ENCODE measurements at regions of chr20 and their contacts with region 1.

Region 1: DNA sequence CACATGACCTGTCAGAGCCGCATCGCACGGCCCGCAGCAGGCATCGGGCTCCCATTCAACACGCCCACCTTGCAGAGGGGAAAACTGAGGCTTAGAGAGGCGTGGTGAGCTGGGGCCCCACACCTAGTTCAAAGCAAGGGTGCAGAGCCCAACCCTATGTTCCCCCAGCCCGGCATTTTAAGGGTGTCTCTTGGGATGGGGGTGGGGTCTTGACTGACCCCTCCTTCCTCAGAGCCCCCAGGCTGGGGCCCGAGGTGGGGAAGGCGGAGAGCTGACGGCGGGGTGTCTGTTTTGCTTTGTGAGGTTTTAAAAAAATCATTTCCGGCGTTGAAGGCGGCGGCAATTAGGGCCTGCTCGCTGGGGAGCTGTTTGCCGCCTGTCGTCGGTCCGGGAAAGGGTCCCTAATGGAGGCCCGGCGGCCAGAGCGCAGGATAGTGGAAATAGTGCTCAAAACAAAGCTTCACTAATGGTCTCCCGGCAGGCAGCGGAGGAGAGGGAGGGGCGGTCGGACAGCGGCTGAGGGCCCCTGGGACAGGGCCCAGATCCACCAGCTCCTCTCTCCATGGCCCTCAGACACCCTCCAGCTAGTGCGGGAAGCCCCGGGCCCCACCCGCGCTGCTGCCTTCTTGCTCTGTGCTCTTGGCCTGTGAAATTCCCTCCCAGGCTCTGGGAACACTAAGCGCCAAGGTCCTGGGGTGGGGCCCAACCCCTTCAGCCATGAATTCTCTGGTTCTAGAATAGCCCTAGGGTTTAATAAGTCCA is 11.9 kb downstream of the VSTM2L start:
- DNase-seq: peak; percentile 95
- H3K4me3 ChIP-seq: peak overlapping the region; percentile 26
- H3K27ac ChIP-seq: peak overlapping the region; percentile 94
- H3K4me1 ChIP-seq: peaks cover 86% of the 10 kb centered on the region
- H3K27me3 ChIP-seq: no peaks in the 10 kb centered on the region
- CTCF ChIP-seq: no peak

Region 2: DNA sequence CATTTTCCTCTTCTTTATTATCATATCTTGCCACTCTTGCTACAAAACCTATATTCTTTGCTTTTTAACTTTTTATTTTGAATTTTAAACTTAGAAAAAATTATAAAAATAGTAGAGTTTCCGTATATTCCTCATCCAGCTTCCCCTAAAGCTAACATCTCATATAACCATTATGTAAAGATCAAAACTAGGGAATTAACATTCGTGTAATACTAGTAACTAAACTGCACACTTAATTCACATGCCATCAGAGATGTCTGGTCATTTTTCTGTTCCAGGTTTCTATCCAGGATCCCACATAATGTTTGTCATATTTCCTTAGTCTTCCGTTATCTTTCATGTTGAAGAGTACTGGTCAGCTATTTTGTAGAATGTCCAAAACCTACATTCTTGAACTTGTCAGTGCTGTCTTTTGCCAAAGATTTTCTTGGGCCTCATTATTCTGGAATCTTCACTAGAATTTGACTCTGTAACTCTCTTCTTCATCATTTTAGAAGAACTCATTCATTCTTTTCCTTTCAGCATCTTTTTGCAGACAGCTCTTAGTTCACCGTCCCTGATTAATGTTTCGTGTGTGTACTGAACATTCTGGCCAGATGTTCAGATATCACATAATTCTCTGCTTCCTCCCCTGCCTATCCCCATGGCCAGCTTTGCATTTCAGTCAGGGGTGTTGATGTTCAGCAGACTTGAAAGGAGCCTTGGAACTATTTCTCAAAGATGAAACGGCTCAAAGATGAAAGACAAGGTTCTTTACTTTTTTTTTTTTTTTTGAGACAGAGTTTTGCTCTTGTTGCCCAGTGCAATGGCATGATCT is 211.6 kb before region 1 on chr20:
- CTCF ChIA-PET with region 1: no interaction called
- POLR2A ChIA-PET with region 1: interaction called, 10 read pairs
- intact Hi-C with region 1: no loop called
- DNase-seq: no peak
- H3K4me3 ChIP-seq: no peak overlapping the region
- H3K27ac ChIP-seq: no peak overlapping the region
- H3K4me1 ChIP-seq: no peaks in the 10 kb centered on the region
- H3K27me3 ChIP-seq: no peaks in the 10 kb centered on the region
- CTCF ChIP-seq: no peak

Region 3: DNA sequence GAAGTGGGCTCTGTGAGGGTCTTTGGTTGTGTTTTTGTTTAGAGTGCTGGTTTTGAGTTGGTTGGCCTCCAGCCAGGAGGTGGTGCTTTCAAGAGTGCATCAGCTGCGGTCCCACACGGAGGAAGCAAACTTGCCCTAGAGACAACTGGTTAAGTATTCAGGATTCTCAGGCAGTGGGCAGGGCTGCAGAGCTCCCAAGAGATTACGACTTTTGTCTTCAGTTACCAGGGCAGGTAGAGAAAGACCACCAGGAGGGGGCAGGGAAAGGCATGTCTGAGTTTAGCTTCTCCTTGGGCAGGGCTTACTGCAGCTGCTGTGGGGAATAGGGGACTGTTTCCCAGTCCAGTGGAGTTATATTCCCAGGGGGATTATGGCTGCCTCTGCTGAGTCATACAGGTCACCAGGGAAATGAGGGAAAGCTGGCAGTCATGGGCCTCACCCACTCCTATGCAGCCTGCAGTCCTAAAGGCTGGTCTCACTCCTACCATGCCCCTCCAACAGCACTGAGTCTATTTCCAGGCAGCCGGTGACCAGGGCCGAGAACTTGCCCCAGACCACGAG is 54.1 kb after region 1 on chr20:
- CTCF ChIA-PET with region 1: interaction called, 11 read pairs
- POLR2A ChIA-PET with region 1: no interaction called
- intact Hi-C with region 1: no loop called
- DNase-seq: peak; percentile 74
- H3K4me3 ChIP-seq: no peak overlapping the region
- H3K27ac ChIP-seq: no peak overlapping the region
- H3K4me1 ChIP-seq: peaks cover 11% of the 10 kb centered on the region
- H3K27me3 ChIP-seq: no peaks in the 10 kb centered on the region
- CTCF ChIP-seq: no peak

Measured in A673 (cell line).